ENCODE measurements at regions of chr13 and their contacts with region 1.

Region 1: DNA sequence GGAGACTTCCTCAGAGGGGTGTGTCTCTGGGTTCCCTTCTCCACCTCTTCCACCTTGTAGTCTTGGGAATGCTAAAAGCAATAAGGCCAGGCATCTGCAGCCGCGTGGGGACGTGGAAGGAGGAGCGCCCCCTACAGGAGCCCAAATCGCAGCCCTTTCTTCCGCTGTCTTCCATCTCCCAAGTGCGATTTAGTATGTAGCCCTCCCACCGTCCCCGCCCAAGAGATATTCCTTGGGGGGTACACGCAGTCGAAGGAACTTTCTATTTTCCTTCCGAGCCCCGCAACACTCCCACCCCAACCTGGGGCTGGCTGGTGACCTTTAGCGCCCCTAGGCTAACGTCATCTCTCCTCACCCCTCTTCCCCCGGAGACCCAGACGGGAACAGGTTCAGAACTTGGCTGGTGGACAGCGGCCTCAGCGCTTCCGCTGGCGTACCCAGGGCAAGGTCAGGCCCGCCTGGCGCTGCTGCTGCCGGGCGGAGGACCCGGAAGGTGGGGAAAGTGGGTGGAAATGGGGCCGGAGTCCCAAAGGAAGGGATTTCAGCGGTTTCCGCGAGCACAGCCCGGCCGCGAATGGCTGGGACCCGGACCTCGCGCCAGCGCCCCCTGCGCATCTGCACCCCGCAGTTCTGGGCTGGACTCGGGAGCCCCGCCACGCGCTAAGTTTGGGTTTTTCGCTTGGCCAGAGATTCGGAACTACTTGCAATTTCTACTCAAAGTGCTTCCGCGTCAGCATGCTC is 2.1 kb upstream of the PCDH8 start:
- DNase-seq: peak; percentile 94
- ATAC-seq: peak; percentile 53
- H3K4me3 Mint-ChIP-seq: peak overlapping the region; percentile 88
- H3K27ac Mint-ChIP-seq: peak overlapping the region; percentile 98
- H3K4me1 Mint-ChIP-seq: peaks cover 39% of the 10 kb centered on the region
- H3K27me3 Mint-ChIP-seq: peaks cover 59% of the 10 kb centered on the region
- CTCF ChIP-seq: peak; percentile 88

Region 2: DNA sequence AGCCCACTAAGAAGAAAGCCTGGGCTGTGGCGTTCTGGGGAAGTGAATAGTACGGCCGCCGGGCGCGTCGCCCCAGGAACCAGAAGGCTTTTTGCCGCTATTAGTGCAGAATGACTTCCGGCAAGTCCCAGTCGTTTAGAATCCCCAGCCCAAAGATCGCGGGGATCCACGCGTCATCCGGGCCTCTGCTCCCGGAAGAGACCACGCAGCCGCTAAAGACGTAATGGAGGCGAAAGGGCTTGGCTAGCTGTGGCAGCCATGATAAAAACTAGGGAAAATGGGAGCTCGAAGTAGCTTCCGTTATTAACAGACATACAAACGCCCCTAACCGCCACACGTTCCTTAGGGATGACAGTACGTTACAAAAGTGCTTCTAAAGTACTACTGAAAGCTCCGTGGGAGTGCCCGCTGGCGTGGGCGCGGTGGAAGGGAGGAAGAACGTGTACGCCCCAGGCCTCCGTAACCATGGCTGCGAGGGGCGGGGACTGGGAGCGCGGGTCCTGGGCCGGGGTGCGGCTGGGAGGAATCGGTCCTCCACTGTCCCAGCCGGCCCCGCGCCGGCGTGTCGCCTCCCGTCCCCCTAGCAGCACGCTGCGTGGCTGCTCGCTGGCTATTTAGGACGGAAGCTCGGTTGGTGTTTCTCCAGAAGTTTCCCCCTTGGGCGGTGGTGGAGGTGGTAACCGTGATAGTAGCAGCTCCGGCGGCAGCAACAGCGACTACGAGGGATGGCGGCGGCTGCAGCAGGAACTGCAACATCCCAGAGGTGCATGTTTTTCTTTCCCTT is 198.2 kb before region 1 on chr13 and contains the start of gene SUGT1:
- CTCF ChIA-PET with region 1: interaction called, 29 read pairs
- POLR2A ChIA-PET with region 1: interaction called, 8 read pairs
- DNase-seq: peak; percentile 96
- ATAC-seq: peak; percentile 96
- H3K4me3 Mint-ChIP-seq: no peak within 1 kb of the TSS
- H3K27ac Mint-ChIP-seq: no peak within 1 kb of the TSS
- H3K4me1 Mint-ChIP-seq: peaks cover 7% of the 10 kb centered on the region
- H3K27me3 Mint-ChIP-seq: no peaks in the 10 kb centered on the region
- CTCF ChIP-seq: no peak; the same call in 1 of the 2 replicates
- total RNA-seq, gene SUGT1: 74.8 to 77.6 TPM (median 76.3 TPM) in 3 replicates

Region 3: DNA sequence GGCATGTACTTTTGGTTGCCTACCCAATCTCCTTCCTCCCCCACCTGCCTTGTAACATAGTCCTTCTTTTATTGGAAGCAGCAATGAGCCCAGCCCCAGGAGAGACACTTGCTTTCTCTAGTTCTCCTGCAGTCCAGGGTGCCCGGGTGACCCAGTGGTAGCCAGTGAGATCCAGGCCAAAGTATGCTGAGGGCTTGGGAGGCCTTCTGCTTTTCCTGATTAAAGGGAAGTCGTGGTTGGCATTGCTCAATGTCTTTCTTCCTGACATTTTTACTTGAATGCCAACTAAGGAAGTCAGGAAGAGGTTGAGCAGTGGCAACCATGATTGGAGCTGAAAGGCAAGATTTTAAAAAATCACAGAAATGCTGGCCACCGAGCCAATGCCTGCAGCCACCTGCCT is 136.7 kb before region 1 on chr13:
- CTCF ChIA-PET with region 1: interaction called, 13 read pairs
- POLR2A ChIA-PET with region 1: no interaction called
- DNase-seq: no peak
- ATAC-seq: no peak
- H3K4me3 Mint-ChIP-seq: no peak overlapping the region
- H3K27ac Mint-ChIP-seq: no peak overlapping the region
- H3K4me1 Mint-ChIP-seq: peaks cover 31% of the 10 kb centered on the region
- H3K27me3 Mint-ChIP-seq: no peaks in the 10 kb centered on the region; the same call in 1 of the 2 replicates
- CTCF ChIP-seq: no peak

Region 4: DNA sequence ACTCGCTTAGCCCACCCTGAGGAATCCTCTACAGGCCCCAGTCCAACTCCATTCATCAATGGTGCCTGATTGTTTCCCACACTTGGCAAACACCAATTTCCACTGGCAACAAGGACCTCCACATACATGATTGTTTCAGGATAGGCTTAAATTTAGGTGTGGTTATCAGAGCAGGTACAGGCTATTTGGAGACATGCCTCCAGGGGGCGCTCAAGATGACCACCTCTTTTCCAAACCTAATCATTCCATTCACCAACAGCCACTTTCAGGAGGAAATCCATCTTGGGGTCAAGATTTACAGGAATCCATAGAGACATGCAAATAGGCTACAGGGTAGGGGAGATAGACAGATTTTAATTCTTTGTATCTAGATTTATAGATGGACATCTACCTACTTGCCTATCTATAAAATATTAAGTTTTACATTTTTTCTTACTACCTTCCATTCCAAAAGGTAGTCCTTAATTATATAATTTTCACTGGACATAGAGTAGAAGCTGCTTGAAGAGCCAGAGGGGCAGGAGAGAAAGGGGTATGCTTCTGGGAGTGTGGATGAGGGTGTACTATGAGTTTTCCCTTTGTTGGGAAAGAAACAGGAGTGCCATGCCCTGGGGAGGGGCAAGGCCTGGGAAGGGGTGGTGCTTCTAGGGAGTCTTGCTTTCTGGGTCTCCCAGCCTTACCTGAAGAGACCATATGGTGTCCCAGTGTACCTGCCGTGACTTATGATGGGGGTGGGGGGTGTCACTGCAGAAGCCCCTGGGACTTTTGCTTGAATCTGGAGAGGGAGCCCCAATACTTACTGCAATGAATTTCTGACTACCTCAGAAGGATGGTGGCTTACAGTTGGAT is 12.0 kb after region 1 on chr13:
- CTCF ChIA-PET with region 1: interaction called, 17 read pairs
- POLR2A ChIA-PET with region 1: interaction called, 3 read pairs
- DNase-seq: peak; percentile 74
- ATAC-seq: peak; percentile 85
- H3K4me3 Mint-ChIP-seq: no peak overlapping the region
- H3K27ac Mint-ChIP-seq: no peak overlapping the region
- H3K4me1 Mint-ChIP-seq: peaks cover 18% of the 10 kb centered on the region
- H3K27me3 Mint-ChIP-seq: peaks cover 48% of the 10 kb centered on the region
- CTCF ChIP-seq: peak; percentile 80

Region 5: DNA sequence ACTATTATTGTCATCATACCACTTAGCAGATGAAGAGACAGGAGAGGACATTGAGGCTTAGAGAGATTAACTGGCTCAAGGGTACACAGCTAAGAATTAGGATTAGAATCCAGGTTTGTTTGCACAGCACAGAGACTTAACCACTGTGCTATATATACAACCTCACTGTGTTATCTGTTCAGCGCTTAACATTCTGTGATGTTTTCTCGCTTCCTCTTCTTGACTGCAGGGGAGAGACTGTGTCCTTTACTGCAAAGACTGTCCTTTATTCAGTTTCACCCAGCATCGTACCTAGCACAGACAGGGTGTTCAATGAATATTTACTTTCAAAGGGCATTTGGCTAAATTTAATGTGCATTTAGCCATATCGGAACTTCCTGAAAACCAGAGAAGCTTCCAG is 52.8 kb after region 1 on chr13:
- CTCF ChIA-PET with region 1: interaction called, 26 read pairs
- POLR2A ChIA-PET with region 1: no interaction called
- DNase-seq: no peak
- ATAC-seq: no peak
- H3K4me3 Mint-ChIP-seq: no peak overlapping the region
- H3K27ac Mint-ChIP-seq: no peak overlapping the region
- H3K4me1 Mint-ChIP-seq: peaks cover 86% of the 10 kb centered on the region
- H3K27me3 Mint-ChIP-seq: peaks cover 37% of the 10 kb centered on the region
- CTCF ChIP-seq: no peak

Region 6: DNA sequence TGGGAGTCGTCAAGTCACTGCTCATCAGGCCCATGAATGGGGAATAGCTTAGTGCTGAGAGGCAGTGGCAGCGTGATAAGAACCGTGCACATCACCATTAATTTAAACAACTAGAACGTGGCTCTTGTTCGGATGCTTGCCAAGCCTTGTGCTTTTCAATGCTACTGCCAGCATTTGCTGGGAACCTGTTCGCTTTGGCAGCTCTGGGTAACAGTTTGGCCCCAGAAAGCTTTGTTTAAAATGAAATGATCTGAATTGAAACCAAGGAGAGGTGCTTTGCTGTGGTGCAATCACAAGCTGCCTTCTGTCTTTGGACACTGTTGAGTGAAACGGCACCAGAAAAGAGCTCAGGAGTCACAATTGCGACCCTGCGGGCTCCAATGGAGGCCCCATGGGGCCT is 124.6 kb after region 1 on chr13:
- CTCF ChIA-PET with region 1: interaction called, 430 read pairs
- POLR2A ChIA-PET with region 1: no interaction called
- DNase-seq: no peak
- ATAC-seq: no peak
- H3K4me3 Mint-ChIP-seq: no peak overlapping the region
- H3K27ac Mint-ChIP-seq: no peak overlapping the region
- H3K4me1 Mint-ChIP-seq: peaks cover 13% of the 10 kb centered on the region
- H3K27me3 Mint-ChIP-seq: no peaks in the 10 kb centered on the region; the same call in 1 of the 2 replicates
- CTCF ChIP-seq: no peak

Region 7: GRCh38 chr13:53092931-53093330 is 242.4 kb after region 1 on chr13:
- CTCF ChIA-PET with region 1: no interaction called
- POLR2A ChIA-PET with region 1: no interaction called
- DNase-seq: no peak
- ATAC-seq: no peak
- H3K4me3 Mint-ChIP-seq: no peak overlapping the region
- H3K27ac Mint-ChIP-seq: no peak overlapping the region
- H3K4me1 Mint-ChIP-seq: peaks cover 4% of the 10 kb centered on the region; the same call in 1 of the 2 replicates
- H3K27me3 Mint-ChIP-seq: 0 out of 2 replicates have a peak, but pooled peaks cover 2% of the 10 kb centered on the region
- CTCF ChIP-seq: no peak

Region 8: GRCh38 chr13:53200498-53201453 is 350.2 kb after region 1 on chr13:
- CTCF ChIA-PET with region 1: interaction called, 111 read pairs
- POLR2A ChIA-PET with region 1: no interaction called
- DNase-seq: peak; percentile 90
- ATAC-seq: peak; percentile 78
- H3K4me3 Mint-ChIP-seq: peak overlapping the region; percentile 55
- H3K27ac Mint-ChIP-seq: no peak overlapping the region
- H3K4me1 Mint-ChIP-seq: no peaks in the 10 kb centered on the region
- H3K27me3 Mint-ChIP-seq: peaks cover 62% of the 10 kb centered on the region
- CTCF ChIP-seq: peak; percentile 92

Measured in WTC11 (cell line).